ENCODE measurements at regions of chr11 and their contacts with region 1.

Region 1: DNA sequence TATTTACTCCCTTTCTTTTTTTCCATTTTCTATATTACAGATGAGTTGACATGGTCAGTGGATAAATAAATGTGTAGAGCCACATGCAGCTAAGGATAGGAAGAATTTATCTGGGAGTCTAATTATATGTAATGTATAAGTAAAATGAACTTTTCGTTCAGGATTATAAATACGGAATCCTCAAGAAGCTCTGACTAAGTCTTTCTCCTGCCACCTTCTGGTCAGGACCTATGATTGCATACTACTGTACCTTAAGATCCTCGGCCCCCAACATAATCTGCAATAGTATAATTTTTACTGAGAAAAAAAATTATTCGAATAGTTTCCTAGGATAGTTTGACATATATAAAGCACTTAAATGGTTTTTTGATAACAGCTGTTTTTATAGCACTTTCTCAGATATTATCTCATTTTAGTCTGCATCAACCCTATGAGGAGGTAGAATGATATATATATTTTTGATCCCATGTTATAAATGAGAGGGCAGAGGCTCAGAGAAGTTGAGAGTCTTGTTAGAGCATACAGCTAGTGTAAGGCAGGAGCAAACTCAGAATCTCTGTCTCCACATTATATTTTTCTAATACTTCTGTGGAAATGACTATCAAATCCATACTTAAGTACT is 36.1 kb downstream of the CCDC90B start:
- DNase-seq: no peak
- H3K4me3 ChIP-seq: no peak overlapping the region
- CTCF ChIP-seq: peak; percentile 53

Region 2: DNA sequence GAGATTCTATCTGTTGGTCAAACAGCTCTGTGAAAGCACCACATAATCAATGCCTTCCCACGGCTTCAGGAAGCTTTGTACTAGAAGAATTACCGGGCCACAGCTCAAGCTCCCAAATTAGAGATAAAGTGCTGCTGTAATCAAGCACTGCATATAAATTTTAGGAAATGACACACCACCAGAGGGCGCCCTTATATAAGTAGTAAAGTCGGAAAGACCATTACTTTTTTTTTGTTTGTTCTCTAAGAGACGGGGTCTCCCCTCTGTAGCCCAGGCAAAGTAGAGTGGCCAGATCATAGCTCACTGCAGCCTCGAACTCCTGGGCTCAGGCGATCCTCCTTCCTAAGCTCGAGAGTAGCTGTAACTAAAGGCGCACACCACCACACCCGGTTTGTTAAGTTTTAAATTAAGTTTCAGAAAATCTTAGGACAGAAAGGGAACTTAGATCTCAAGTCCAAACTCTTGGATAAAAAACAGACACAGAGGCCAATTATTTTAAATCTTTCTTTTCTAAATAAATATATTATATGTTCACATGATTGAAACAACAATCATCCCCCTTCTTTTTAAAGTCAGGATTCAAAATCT is 382.5 kb before region 1 on chr11:
- CTCF ChIA-PET with region 1: interaction called, 94 read pairs
- POLR2A ChIA-PET with region 1: no interaction called
- DNase-seq: no peak
- H3K4me3 ChIP-seq: peak overlapping the region; percentile 24
- CTCF ChIP-seq: peak; percentile 52

Region 3: DNA sequence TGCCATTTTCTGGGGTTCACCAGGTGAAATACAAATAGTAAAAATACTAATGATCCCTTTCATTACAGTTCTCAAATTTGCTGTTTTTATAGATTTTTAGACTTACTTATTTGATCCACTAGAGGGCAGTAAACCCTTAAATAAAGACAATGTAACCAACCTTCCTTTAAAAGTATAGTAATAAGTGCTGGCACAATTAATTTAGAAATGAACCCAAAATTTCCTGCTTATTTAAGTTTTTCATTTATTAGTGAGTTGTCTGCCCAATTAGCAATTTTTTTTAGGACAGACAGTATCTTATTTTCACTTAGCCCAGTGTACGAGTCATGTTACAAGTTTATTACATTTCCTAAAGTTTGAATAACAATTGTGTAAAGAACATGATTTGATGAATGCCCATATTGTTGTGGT is 343.8 kb before region 1 on chr11:
- CTCF ChIA-PET with region 1: interaction called, 74 read pairs
- POLR2A ChIA-PET with region 1: interaction called, 3 read pairs
- DNase-seq: no peak
- H3K4me3 ChIP-seq: no peak overlapping the region
- CTCF ChIP-seq: no peak

Region 4: DNA sequence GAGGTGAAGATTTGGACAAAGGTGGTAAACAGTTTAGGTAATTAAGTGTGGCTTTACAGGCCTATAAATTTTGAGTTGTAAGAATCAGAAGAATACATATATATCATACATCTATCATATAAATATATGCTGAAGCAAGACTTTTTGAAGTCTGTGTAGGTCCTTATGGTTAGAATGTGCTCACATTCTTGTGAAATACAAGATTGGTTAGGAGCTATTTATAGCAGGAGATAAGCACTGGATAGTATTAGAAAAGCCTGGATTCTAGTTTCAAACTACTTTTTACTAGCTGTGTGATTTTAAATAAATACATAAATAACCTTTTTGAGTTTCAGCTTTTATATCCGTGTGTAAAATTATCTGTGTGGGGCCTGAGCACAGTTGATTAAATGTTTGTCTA is 14.3 kb before region 1 on chr11:
- CTCF ChIA-PET with region 1: interaction called, 81 read pairs
- POLR2A ChIA-PET with region 1: no interaction called
- DNase-seq: no peak
- H3K4me3 ChIP-seq: no peak overlapping the region
- CTCF ChIP-seq: no peak

Region 5: DNA sequence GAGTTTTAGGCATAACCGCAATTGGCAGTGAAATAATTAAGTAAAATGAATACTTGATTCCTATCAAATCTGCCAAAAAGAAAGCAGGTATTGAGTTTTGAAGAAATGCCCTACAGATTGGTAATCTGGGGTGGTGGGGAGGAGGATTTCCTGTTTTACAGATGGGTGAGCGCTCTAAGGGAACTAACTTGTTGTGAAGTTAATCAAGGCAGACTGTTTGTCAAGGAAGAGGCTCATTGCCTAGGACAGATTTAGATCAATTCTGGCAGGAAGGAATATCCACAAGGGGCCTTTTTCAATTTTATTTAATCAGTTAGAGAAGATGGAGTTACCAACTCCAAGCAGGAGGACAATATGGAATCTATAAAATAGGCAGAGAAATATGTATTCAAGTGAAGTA is 307.6 kb after region 1 on chr11:
- CTCF ChIA-PET with region 1: no interaction called
- POLR2A ChIA-PET with region 1: no interaction called
- DNase-seq: no peak
- H3K4me3 ChIP-seq: no peak overlapping the region
- CTCF ChIP-seq: no peak

Region 6: DNA sequence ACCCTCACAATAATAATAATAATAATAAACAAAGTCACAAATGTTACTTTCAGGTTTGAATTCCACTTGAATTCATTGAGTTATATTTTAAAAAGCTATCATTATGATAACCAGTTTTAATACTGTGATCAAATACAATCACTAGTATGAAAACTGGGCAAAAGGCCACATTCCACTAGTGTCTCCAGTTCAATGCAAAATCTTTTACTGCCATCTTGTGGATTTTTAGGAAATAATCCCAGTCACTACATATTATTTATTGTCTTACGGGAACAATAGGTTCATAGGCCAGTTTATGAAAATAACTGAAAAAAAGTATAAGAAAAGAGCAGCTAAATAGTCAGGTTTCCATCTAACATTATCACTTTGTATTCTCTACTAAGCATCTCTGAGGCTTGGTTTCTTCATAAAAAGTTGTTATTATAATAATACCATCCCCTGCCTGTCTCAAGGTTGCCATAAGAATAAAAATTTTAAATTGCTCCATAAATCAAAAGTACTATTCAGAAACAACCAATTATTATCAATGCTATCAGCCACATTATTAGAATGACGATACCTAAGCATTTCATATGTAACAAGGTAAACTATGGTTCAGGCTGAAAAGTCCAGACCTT is 570.0 kb after region 1 on chr11:
- CTCF ChIA-PET with region 1: interaction called, 53 read pairs
- POLR2A ChIA-PET with region 1: no interaction called
- DNase-seq: peak; percentile 26
- H3K4me3 ChIP-seq: no peak overlapping the region
- CTCF ChIP-seq: peak; percentile 35

Measured in AG04449 (cell line).